Activated B cell treated with CpG ODN at 0.5 μM for 24 hours (primary cell): ENCODE measurements at regions of chr22 and their contacts with region 1.

Region 1: GRCh38 chr22:42114721-42115120 is 15.9 kb downstream of the CYP2D6 start:
- DNase-seq: no peak
- ATAC-seq: no peak
- H3K4me3 Mint-ChIP-seq: no peak overlapping the region
- H3K27ac Mint-ChIP-seq: no peak overlapping the region
- H3K4me1 Mint-ChIP-seq: peaks cover 3% of the 10 kb centered on the region
- H3K27me3 Mint-ChIP-seq: no peaks in the 10 kb centered on the region
- CTCF ChIP-seq: no peak

Region 2: GRCh38 chr22:41966607-41967240 is 148.0 kb before region 1 on chr22:
- CTCF ChIA-PET with region 1: interaction called, 24 read pairs
- POLR2A ChIA-PET with region 1: no interaction called
- intact Hi-C with region 1: loop called (anchors 1 kb)
- DNase-seq: no peak
- ATAC-seq: peak; percentile 89
- H3K4me3 Mint-ChIP-seq: no peak overlapping the region
- H3K27ac Mint-ChIP-seq: no peak overlapping the region
- H3K4me1 Mint-ChIP-seq: no peaks in the 10 kb centered on the region
- H3K27me3 Mint-ChIP-seq: peaks cover 10% of the 10 kb centered on the region
- CTCF ChIP-seq: no peak

Region 3: GRCh38 chr22:42151924-42152635 is 37.4 kb after region 1 on chr22:
- CTCF ChIA-PET with region 1: no interaction called
- POLR2A ChIA-PET with region 1: no interaction called
- intact Hi-C with region 1: no loop called
- DNase-seq: no peak
- ATAC-seq: no peak
- H3K4me3 Mint-ChIP-seq: no peak overlapping the region
- H3K27ac Mint-ChIP-seq: no peak overlapping the region
- H3K4me1 Mint-ChIP-seq: no peaks in the 10 kb centered on the region
- H3K27me3 Mint-ChIP-seq: no peaks in the 10 kb centered on the region
- CTCF ChIP-seq: no peak